BJ (cell line): ENCODE measurements at regions of chr7 and their contacts with region 1.

Region 1: GRCh38 chr7:116258734-116259133 is 48.4 kb downstream of the TES start:
- DNase-seq: no peak
- H3K4me3 ChIP-seq: no peak overlapping the region
- H3K27me3 ChIP-seq: no peaks in the 10 kb centered on the region
- CTCF ChIP-seq: peak; percentile 69

Region 2: GRCh38 chr7:116271963-116272839 is 13.5 kb after region 1 on chr7:
- CTCF ChIA-PET with region 1: interaction called, 15 read pairs
- POLR2A ChIA-PET with region 1: no interaction called
- DNase-seq: peak; percentile 85
- H3K4me3 ChIP-seq: peak overlapping the region; percentile 14
- H3K27me3 ChIP-seq: no peaks in the 10 kb centered on the region
- CTCF ChIP-seq: no peak

Region 3: GRCh38 chr7:116511552-116512519 is 253.1 kb after region 1 on chr7:
- CTCF ChIA-PET with region 1: interaction called, 4 read pairs
- POLR2A ChIA-PET with region 1: interaction called, 17 read pairs
- DNase-seq: no peak
- H3K4me3 ChIP-seq: no peak overlapping the region
- H3K27me3 ChIP-seq: no peaks in the 10 kb centered on the region
- CTCF ChIP-seq: no peak

Region 4: DNA sequence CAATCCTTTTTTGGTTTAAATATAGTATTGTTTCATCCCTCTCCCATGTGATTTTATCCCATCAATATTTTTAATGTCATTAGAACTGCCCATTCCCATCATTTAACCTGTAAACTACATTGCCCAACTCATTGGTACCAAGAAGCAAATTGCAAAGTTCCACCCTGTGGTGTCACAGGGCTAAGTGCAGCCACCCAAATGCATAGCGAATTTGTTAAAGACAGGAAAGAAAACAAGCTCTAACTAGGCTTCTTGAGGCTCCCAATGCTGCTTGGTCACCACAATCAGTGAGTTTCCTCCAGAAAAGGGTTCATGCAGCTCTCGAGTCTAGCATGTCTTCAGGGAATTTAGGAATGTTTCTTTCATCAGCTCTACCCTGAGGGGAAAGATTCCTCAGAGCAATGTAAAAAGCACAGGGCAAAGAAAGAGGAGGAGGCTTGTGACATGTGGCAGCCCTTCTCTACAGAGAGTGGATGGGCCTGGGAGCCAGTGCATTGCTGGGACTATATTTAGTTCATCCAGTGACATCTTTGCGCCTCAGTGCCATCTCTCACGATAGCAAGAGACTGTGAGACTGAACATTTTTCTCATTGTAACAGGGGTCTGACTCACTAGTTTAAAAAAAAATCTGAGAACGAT is 324.2 kb after region 1 on chr7:
- CTCF ChIA-PET with region 1: interaction called, 39 read pairs
- POLR2A ChIA-PET with region 1: interaction called, 21 read pairs
- DNase-seq: peak; percentile 96
- H3K4me3 ChIP-seq: no peak overlapping the region
- H3K27me3 ChIP-seq: no peaks in the 10 kb centered on the region
- CTCF ChIP-seq: no peak